ENCODE measurements at regions of chr18 and their contacts with region 1.

Region 1: DNA sequence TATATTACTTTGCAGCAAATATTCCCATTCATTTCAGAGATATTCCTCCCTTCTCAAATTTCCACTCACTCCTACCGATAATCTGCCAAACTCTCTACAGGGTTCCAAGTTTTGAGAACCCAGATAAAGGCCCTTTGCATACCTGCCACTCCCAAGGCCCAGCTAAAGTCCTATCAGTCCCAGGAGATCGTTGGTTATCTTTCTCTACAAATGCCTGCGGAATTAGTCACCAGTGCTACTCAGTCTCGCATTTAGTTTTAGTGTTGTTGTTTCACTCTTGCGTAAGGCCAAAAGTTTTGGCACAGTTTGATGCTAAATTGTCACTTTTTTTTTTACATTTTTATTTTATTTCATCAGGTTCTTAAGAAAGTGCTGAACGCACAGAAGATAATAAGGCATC is 29.2 kb upstream of the SETBP1 start:
- DNase-seq: peak; percentile 47
- H3K4me3 Mint-ChIP-seq: no peak overlapping the region
- H3K27ac Mint-ChIP-seq: peak overlapping the region; percentile 90
- H3K4me1 Mint-ChIP-seq: peaks cover 60% of the 10 kb centered on the region
- H3K27me3 Mint-ChIP-seq: no peaks in the 10 kb centered on the region
- CTCF ChIP-seq: no peak

Region 2: DNA sequence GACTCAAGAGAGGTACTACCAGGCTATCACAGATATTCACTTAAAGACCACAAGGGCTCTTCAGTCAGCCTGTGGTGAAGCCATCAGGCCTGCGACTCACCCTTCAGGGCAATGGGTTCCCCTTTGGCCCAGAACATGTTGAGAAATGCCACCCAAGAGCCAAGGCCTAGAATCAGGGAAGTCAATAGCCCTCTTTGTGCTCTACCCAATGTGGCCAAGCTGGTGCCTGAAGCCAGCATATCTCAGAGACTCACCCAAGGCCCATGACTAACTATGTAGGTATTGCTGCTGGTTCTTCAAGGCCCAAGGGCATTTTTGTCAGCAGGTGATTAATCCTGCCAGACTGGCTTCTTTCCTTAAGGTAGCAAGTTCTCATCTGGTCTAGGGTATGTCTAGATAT is 309.7 kb before region 1 on chr18:
- CTCF ChIA-PET with region 1: no interaction called
- intact Hi-C with region 1: loop called (anchors 10 kb)
- DNase-seq: peak; percentile 70
- H3K4me3 Mint-ChIP-seq: no peak overlapping the region
- H3K27ac Mint-ChIP-seq: peak overlapping the region; percentile 69
- H3K4me1 Mint-ChIP-seq: peaks cover 29% of the 10 kb centered on the region
- H3K27me3 Mint-ChIP-seq: no peaks in the 10 kb centered on the region
- CTCF ChIP-seq: no peak

Region 3: GRCh38 chr18:44370861-44371260 is 280.6 kb before region 1 on chr18:
- CTCF ChIA-PET with region 1: no interaction called
- intact Hi-C with region 1: no loop called
- DNase-seq: no peak
- H3K4me3 Mint-ChIP-seq: no peak overlapping the region
- H3K27ac Mint-ChIP-seq: no peak overlapping the region
- H3K4me1 Mint-ChIP-seq: peaks cover 4% of the 10 kb centered on the region
- H3K27me3 Mint-ChIP-seq: no peaks in the 10 kb centered on the region
- CTCF ChIP-seq: no peak

Region 4: DNA sequence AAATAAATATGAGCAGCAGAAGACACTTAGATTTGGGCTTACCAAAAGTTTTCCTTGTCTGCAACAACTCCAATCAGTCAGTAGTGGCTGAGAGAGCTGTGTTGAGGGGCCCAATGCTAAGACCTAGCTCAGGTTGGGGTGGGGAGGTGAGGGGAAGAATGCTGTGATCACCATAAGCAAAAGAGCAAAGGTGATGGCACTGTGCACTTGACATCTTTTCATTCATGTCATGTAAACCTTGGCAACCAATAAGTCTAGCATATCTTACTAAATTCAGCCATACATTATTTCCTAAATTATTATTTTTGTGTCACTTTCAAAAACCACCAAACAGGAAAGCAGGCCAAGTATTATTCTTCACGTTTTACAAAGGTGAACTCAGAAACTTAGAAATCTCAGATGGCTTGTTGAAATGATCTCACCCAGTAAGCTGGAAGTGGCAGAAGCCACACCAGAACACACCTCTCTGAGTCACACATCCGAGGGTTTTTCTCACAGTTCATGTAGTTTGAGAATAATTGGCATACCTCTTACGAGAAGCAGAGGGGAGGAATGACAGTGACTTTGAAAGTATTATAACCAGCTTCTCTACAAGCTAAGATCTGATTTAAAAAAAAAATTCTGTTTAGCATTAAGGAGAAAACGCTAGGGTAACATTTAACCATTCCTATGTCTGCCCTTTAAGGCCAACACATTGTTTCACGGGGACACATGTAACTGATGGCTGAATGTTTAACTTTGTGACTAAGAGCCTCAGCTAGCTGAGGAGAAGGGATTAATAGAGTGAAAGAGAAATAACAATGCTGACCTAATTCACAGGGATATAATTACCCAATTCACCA is 14.0 kb before region 1 on chr18:
- CTCF ChIA-PET with region 1: no interaction called
- intact Hi-C with region 1: loop called (anchors 2 kb)
- DNase-seq: peak; percentile 35
- H3K4me3 Mint-ChIP-seq: peak overlapping the region; percentile 26
- H3K27ac Mint-ChIP-seq: peak overlapping the region; percentile 61
- H3K4me1 Mint-ChIP-seq: peaks cover 40% of the 10 kb centered on the region
- H3K27me3 Mint-ChIP-seq: no peaks in the 10 kb centered on the region
- CTCF ChIP-seq: no peak

Region 5: DNA sequence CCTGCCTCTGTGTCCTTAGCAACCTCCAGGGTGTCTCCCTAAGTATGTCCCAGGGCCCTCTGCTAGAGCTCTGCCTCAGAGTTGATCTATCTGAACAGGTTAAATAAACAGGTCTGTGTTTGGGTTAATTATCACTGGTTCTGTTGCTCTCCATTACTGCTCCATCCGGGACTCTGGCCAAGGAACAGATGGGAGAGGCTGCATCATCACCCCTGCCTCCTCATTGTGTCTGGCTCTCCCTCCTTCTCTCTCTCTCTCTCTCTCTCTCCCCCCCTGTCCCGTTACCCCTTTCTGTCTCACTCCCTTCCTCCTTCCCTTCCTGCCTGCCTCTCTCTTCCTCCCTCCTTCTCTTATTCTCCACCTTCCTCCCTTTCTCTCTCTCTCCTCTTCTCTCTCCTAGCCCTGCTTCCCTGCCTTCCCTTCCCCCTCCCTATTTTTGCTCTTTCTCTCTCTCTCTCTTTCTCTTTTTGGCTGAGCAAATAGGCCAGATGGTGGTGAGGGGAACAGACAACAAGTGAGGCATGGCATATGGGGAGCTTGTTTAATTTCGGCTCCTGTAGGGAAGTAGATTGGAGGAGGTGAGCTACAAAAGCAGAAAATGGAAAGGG is 91.4 kb after region 1 on chr18:
- CTCF ChIA-PET with region 1: no interaction called
- intact Hi-C with region 1: no loop called
- DNase-seq: no peak
- H3K4me3 Mint-ChIP-seq: no peak overlapping the region
- H3K27ac Mint-ChIP-seq: no peak overlapping the region
- H3K4me1 Mint-ChIP-seq: no peaks in the 10 kb centered on the region
- H3K27me3 Mint-ChIP-seq: no peaks in the 10 kb centered on the region
- CTCF ChIP-seq: no peak

Region 6: DNA sequence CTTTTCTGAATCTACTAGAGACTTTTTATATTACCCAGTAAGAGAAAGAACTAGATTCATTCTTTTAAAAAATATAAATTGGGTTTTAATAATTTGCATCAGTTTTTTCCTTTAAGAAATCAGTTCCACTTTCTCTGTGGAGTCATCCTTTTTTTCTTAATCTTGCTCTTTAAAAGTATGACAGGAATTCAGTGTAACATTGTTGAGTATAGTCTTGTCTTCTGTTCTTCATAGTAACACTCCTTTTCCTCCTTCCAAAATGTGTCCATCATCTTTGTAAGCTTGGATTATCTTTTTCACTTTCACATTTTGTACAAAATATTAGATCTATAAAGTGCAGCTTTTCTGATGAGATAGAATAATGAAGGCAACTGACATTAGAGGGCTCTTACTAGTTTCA is 1588.1 kb after region 1 on chr18:
- CTCF ChIA-PET with region 1: no interaction called
- intact Hi-C with region 1: no loop called
- DNase-seq: no peak
- H3K4me3 Mint-ChIP-seq: no peak overlapping the region
- H3K27ac Mint-ChIP-seq: no peak overlapping the region
- H3K4me1 Mint-ChIP-seq: peaks cover 24% of the 10 kb centered on the region
- H3K27me3 Mint-ChIP-seq: no peaks in the 10 kb centered on the region
- CTCF ChIP-seq: no peak